ENCODE measurements at regions of chr17 and their contacts with region 1.

Region 1: DNA sequence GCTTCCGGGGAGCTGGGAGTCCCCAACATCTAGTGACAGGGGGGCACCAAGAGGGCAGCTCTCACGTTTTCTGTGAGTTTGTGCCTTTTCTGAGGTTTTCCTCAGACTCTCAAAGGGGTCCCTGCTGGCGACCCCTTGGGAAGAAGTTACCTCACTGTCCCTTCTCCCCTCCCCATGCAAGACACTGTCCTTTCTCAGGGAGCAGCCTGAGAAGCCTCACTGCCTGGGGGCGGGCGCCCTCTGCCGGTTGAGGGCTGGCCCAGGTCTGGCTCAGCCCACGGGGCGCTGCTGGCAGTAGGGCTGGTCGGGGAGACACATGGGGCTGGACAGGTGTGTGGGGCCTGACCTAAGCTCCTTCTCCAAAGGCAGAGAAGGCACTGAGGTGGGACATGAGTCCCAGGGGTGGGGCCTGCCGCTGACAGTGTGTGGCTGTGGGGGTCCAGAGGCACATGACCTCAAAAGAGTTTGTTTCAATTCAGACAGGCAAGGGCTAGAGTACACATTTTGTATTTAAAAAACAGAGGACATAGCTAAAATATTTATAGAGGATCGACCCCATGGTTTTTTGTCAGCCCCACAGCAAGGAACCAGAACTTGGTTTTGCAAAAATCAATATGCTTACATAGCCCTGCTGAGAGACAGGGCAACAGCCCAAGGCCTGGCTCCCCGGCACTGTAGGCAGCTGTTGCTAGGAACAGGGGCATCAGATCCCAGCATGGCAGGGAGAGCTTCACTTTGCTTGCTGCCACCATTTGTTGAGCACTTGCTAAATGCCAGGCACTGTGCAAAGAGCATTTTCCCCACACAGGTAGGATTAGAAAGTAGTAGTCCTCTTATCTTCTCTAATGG is 18.5 kb upstream of the ALDH3A1 start:
- DNase-seq: peak; percentile 70 to 83 (median 76)
- ATAC-seq: peak; percentile 80
- H3K4me3 ChIP-seq: no peak overlapping the region
- H3K27ac ChIP-seq: no peak overlapping the region
- H3K4me1 ChIP-seq: peaks cover 6% of the 10 kb centered on the region
- H3K27me3 ChIP-seq: no peaks in the 10 kb centered on the region
- CTCF ChIP-seq: peak; percentile 84 to 98 (median 90)
- POLR2A ChIP-seq: no peak

Region 2: DNA sequence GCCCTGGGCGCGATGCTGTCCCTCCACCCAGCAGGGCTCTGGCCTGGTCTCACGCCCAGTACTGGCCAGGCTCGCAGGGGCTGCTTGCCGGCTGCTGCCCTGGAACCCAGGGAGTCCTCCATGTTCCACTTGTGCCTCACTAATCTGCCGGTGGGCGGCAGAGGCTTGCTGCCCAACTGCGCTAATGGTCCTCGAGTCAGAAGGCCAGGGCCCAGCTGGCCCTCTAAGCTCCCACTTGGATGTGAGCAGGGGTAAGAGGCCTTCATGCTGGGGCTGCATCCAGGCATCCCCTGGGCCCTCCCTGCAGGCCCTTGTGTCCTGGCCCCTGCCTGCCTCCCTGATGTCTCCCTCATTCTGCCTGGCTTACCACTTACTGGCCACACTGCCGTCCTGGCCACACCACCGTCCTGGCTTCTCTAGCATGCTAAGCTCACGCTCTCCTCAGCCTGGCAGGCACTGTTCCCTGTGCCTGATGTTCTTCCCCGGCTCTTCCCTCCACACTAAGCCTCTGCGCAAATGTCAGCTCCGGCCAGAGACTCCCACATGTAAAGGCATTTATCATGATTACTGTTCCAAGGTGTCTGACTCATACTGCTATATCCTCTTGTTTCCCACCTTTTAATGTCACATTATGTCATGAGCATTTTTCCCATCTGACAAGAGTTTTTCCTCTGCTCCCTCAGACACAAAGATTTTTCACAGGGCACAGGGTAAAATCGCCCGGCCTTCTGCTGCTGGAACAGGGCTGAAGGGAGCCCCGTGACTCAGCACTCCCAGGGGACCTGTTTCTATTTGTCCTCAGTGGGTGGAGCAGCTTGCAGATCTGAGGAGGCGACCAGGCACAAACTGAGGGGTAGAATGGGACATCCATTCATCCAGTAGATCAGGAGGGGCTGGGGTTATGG is 420.0 kb before region 1 on chr17:
- intact Hi-C with region 1: loop called (anchors 10 kb)
- DNase-seq: peak in 2 of 4 donors; percentile 10 to 48
- ATAC-seq: peak; percentile 49
- H3K4me3 ChIP-seq: no peak overlapping the region
- H3K27ac ChIP-seq: peak overlapping the region in 3 of 4 donors; percentile 15 to 34 (median 30)
- H3K4me1 ChIP-seq: no peaks in the 10 kb centered on the region
- H3K27me3 ChIP-seq: no peaks in the 10 kb centered on the region
- CTCF ChIP-seq: no peak
- POLR2A ChIP-seq: no peak

Region 3: GRCh38 chr17:19513897-19514488 is 252.7 kb before region 1 on chr17:
- intact Hi-C with region 1: loop called (anchors 5 kb)
- DNase-seq: peak; percentile 69 to 74 (median 74)
- ATAC-seq: peak; percentile 80
- H3K4me3 ChIP-seq: no peak overlapping the region
- H3K27ac ChIP-seq: no peak overlapping the region
- H3K4me1 ChIP-seq: no peaks in the 10 kb centered on the region
- H3K27me3 ChIP-seq: no peaks in the 10 kb centered on the region
- CTCF ChIP-seq: peak; percentile 84 to 92 (median 87)
- POLR2A ChIP-seq: no peak

Region 4: GRCh38 chr17:19678581-19679453 is 87.8 kb before region 1 on chr17:
- intact Hi-C with region 1: no loop called
- DNase-seq: no peak
- ATAC-seq: no peak
- H3K4me3 ChIP-seq: no peak overlapping the region
- H3K27ac ChIP-seq: no peak overlapping the region
- H3K4me1 ChIP-seq: peaks cover 7% of the 10 kb centered on the region
- H3K27me3 ChIP-seq: no peaks in the 10 kb centered on the region
- CTCF ChIP-seq: no peak
- POLR2A ChIP-seq: no peak

Region 5: GRCh38 chr17:19883537-19884215 is 117.0 kb after region 1 on chr17:
- intact Hi-C with region 1: no loop called
- DNase-seq: no peak
- ATAC-seq: no peak
- H3K4me3 ChIP-seq: no peak overlapping the region
- H3K27ac ChIP-seq: no peak overlapping the region
- H3K4me1 ChIP-seq: no peaks in the 10 kb centered on the region
- H3K27me3 ChIP-seq: no peaks in the 10 kb centered on the region
- CTCF ChIP-seq: no peak
- POLR2A ChIP-seq: no peak